ENCODE measurements at regions of chr16 and their contacts with region 1.

Region 1: GRCh38 chr16:495127-495748 is 32.3 kb upstream of the CAPN15 start:
- DNase-seq: peak in 1 of 3 donors; percentile 59
- ATAC-seq: peak; percentile 72 to 77 (median 75)
- H3K4me3 ChIP-seq: no peak overlapping the region
- H3K27ac ChIP-seq: no peak overlapping the region
- H3K4me1 ChIP-seq: no peaks in the 10 kb centered on the region
- H3K27me3 ChIP-seq: no peaks in the 10 kb centered on the region
- CTCF ChIP-seq: peak in 3 of 4 donors; percentile 40 to 49 (median 44)
- POLR2A ChIP-seq: no peak

Region 2: GRCh38 chr16:381789-382717 is 113.2 kb before region 1 on chr16 and contains the start of gene PGAP6:
- intact Hi-C with region 1: loop called in 1 of 2 experiments (anchors 10 kb)
- DNase-seq: peak; percentile 72 to 79 (median 78)
- ATAC-seq: peak; percentile 76 to 88 (median 78)
- H3K4me3 ChIP-seq: peak within 1 kb of the TSS; percentile 87 to 94 (median 94)
- H3K27ac ChIP-seq: peak within 1 kb of the TSS; percentile 50 to 70 (median 57)
- H3K4me1 ChIP-seq: peaks cover 0 to 5% (median 0%) of the 10 kb centered on the region in 4 donors
- H3K27me3 ChIP-seq: no peaks in the 10 kb centered on the region
- CTCF ChIP-seq: no peak
- POLR2A ChIP-seq: no peak
- total RNA-seq, gene PGAP6: 24.3 to 44.6 (median 28.0) TPM

Region 3: DNA sequence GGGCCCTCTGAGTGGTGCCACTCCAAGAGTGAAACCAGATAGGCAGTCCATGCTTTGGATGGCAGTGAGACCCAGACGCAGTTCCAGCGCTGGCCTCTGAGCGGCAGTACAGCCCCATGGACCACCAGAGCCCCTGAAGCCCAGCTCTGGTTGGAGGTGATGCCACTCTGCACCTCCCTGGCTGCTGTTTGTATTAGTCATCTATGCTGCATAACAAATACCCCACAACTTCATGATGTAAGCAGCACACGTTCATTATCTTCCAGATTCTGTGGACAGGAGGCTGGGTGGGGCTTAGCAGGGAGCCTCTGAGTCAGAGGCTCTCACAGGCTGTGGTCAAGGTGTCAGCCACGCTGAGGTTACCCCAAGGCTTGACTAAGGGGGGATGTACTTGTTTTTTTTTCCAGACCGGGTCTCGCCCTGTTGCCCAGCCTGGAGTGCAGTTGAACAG is 103.3 kb before region 1 on chr16:
- intact Hi-C with region 1: loop called (anchors 10 kb)
- DNase-seq: peak in 1 of 3 donors; percentile 64
- ATAC-seq: peak; percentile 87 to 92 (median 90)
- H3K4me3 ChIP-seq: no peak overlapping the region
- H3K27ac ChIP-seq: no peak overlapping the region
- H3K4me1 ChIP-seq: no peaks in the 10 kb centered on the region
- H3K27me3 ChIP-seq: no peaks in the 10 kb centered on the region
- CTCF ChIP-seq: peak; percentile 56 to 82 (median 70)
- POLR2A ChIP-seq: no peak

Region 4: GRCh38 chr16:546909-547770 is 51.9 kb after region 1 on chr16:
- intact Hi-C with region 1: no loop called
- DNase-seq: peak in 2 of 3 donors; percentile 62 to 79
- ATAC-seq: peak in 2 of 4 donors; percentile 10 to 18
- H3K4me3 ChIP-seq: no peak overlapping the region
- H3K27ac ChIP-seq: no peak overlapping the region
- H3K4me1 ChIP-seq: peaks cover 0 to 16% (median 5%) of the 10 kb centered on the region in 4 donors
- H3K27me3 ChIP-seq: no peaks in the 10 kb centered on the region
- CTCF ChIP-seq: peak in 2 of 4 donors; percentile 16 to 25
- POLR2A ChIP-seq: no peak